HCT116 (cell line): ENCODE measurements at regions of chr4 and their contacts with region 1.

Region 1: GRCh38 chr4:188781655-188782054 is 642.4 kb downstream of the TRIML1 start:
- DNase-seq: peak; percentile 21
- ATAC-seq: peak; percentile 90
- H3K4me3 ChIP-seq: no peak overlapping the region
- H3K27ac ChIP-seq: no peak overlapping the region
- H3K4me1 ChIP-seq: no peaks in the 10 kb centered on the region
- H3K27me3 ChIP-seq: no peaks in the 10 kb centered on the region
- CTCF ChIP-seq: peak; percentile 29 to 83 (median 70); a peak in 5 of 6 replicates
- POLR2A ChIP-seq: no peak
- RAD21 ChIP-seq: peak; percentile 45; the same call in 1 of the 2 replicates

Region 2: GRCh38 chr4:187903700-187904099 is 878.0 kb before region 1 on chr4:
- CTCF ChIA-PET with region 1: no interaction called
- POLR2A ChIA-PET with region 1: no interaction called
- RAD21 ChIA-PET with region 1: no interaction called
- intact Hi-C with region 1: no loop called
- DNase-seq: no peak
- ATAC-seq: no peak
- H3K4me3 ChIP-seq: no peak overlapping the region
- H3K27ac ChIP-seq: no peak overlapping the region
- H3K4me1 ChIP-seq: peaks cover 0 to 7% of the 10 kb centered on the region in 2 experiments; a peak in 1 of 4 replicates
- H3K27me3 ChIP-seq: no peaks in the 10 kb centered on the region
- CTCF ChIP-seq: no peak
- POLR2A ChIP-seq: no peak
- RAD21 ChIP-seq: no peak

Region 3: GRCh38 chr4:189060104-189060503 is 278.4 kb after region 1 on chr4:
- CTCF ChIA-PET with region 1: no interaction called
- POLR2A ChIA-PET with region 1: no interaction called
- RAD21 ChIA-PET with region 1: no interaction called
- intact Hi-C with region 1: loop called (anchors 5 kb)
- DNase-seq: no peak
- ATAC-seq: no peak
- H3K4me3 ChIP-seq: no peak overlapping the region
- H3K27ac ChIP-seq: no peak overlapping the region
- H3K4me1 ChIP-seq: no peaks in the 10 kb centered on the region
- H3K27me3 ChIP-seq: no peaks in the 10 kb centered on the region
- CTCF ChIP-seq: no peak
- POLR2A ChIP-seq: no peak
- RAD21 ChIP-seq: no peak

Region 4: DNA sequence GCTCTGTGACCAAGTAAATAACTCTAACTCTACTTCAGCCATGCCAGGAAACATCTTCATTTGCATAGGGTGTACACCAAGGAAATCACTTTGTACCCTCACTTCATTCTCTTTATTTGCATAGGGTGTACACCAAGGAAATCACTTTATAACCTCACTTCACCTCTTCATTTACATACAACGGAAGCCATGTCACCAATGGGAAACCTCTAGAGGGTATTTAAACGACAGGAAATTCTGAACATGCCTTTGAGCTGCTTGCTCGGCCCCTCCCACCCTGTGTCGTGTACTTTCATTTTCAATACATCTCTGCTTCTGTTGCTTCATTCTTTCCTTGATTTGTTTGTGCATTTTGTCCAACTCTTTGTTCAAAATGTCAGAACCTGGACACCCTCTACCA is 310.9 kb after region 1 on chr4:
- CTCF ChIA-PET with region 1: no interaction called
- POLR2A ChIA-PET with region 1: no interaction called
- RAD21 ChIA-PET with region 1: no interaction called
- intact Hi-C with region 1: no loop called
- DNase-seq: no peak
- ATAC-seq: no peak
- H3K4me3 ChIP-seq: no peak overlapping the region
- H3K27ac ChIP-seq: no peak overlapping the region
- H3K4me1 ChIP-seq: no peaks in the 10 kb centered on the region
- H3K27me3 ChIP-seq: no peaks in the 10 kb centered on the region
- CTCF ChIP-seq: no peak
- POLR2A ChIP-seq: no peak
- RAD21 ChIP-seq: no peak

Region 5: GRCh38 chr4:189124149-189124758 is 342.6 kb after region 1 on chr4:
- CTCF ChIA-PET with region 1: interaction called, 3 read pairs
- POLR2A ChIA-PET with region 1: no interaction called
- RAD21 ChIA-PET with region 1: no interaction called
- intact Hi-C with region 1: loop called (anchors 2 kb)
- DNase-seq: peak; percentile 22
- ATAC-seq: peak; percentile 82
- H3K4me3 ChIP-seq: no peak overlapping the region
- H3K27ac ChIP-seq: no peak overlapping the region
- H3K4me1 ChIP-seq: no peaks in the 10 kb centered on the region
- H3K27me3 ChIP-seq: no peaks in the 10 kb centered on the region
- CTCF ChIP-seq: peak; percentile 56 to 76 (median 64); a peak in 5 of 6 replicates
- POLR2A ChIP-seq: no peak
- RAD21 ChIP-seq: peak; percentile 89

Region 6: GRCh38 chr4:189202182-189202868 is 420.7 kb after region 1 on chr4:
- CTCF ChIA-PET with region 1: no interaction called
- POLR2A ChIA-PET with region 1: no interaction called
- RAD21 ChIA-PET with region 1: no interaction called
- intact Hi-C with region 1: loop called (anchors 5 kb)
- DNase-seq: peak; percentile 28
- ATAC-seq: peak; percentile 92
- H3K4me3 ChIP-seq: peak overlapping the region in 1 of 2 experiments; percentile 26; a peak in 2 of 4 replicates
- H3K27ac ChIP-seq: no peak overlapping the region
- H3K4me1 ChIP-seq: peaks cover 0 to 7% of the 10 kb centered on the region in 2 experiments; a peak in 2 of 4 replicates
- H3K27me3 ChIP-seq: no peaks in the 10 kb centered on the region
- CTCF ChIP-seq: peak; percentile 74 to 97 (median 82)
- POLR2A ChIP-seq: no peak
- RAD21 ChIP-seq: peak; percentile 93